GM10248 (cell line): ENCODE measurements at regions of chr14 and their contacts with region 1.

Region 1: DNA sequence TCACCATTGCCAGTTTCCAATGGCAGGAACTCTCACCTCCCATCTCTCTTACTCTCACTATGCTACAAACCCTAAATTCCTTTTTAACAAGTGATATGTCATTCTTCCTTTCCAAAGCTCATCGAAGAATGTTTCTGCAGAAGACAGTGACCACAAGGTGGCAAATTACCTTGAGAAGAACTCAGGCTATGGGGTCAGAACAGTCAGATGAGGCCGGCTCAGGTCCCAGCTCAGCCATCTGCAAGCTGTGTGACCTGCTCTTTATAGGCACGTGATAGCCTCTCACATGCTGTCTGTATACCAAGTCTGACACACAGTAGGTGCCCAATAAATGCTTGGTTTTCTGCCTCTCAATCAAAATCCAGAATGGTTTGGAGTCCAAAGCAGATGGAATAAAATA is 80.7 kb downstream of the FOXN3 start:
- DNase-seq: no peak
- CTCF ChIP-seq: peak; percentile 50

Region 2: DNA sequence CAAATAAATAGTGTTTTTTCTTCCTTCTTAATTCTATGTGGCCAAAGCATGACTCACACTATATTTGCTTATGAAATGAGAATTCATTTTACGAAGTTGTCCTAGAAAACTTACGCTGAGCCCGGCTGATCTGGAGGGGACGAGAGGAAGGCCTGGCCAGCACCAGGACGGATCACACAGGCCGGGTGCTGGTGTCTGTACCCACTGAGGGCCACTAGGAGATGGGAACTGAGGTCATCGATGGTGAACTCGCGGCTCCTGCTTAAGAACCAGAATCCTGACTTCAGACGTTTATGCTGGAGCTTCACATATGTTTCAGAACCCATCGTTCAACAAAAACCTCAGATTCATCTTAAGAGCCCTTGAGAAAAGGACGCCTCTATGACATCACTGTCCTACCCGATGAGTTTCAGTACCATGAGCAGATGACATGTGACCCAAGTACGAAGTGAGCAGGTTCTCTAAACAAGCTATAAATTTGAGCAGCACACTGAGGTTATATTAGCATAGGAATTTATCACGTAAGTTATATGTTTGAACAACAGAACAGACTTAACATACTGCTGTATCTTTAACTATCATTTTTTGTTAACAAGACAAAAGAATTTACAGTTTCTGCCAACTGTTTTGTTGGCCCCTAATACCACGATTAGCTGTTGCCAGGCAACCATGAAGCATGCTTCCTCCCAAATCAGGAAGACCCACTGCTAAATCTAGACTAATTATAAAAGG is 31.2 kb before region 1 on chr14:
- CTCF ChIA-PET with region 1: interaction called, 11 read pairs
- POLR2A ChIA-PET with region 1: no interaction called
- DNase-seq: peak; percentile 59
- CTCF ChIP-seq: no peak

Region 3: GRCh38 chr14:89317051-89317691 is 19.2 kb before region 1 on chr14:
- CTCF ChIA-PET with region 1: interaction called, 12 read pairs
- POLR2A ChIA-PET with region 1: no interaction called
- DNase-seq: peak; percentile 39
- CTCF ChIP-seq: no peak

Region 4: GRCh38 chr14:89325299-89325883 is 10.9 kb before region 1 on chr14:
- CTCF ChIA-PET with region 1: interaction called, 11 read pairs
- POLR2A ChIA-PET with region 1: no interaction called
- DNase-seq: peak; percentile 40
- CTCF ChIP-seq: no peak